ENCODE measurements at regions of chr18 and their contacts with region 1.

Region 1: DNA sequence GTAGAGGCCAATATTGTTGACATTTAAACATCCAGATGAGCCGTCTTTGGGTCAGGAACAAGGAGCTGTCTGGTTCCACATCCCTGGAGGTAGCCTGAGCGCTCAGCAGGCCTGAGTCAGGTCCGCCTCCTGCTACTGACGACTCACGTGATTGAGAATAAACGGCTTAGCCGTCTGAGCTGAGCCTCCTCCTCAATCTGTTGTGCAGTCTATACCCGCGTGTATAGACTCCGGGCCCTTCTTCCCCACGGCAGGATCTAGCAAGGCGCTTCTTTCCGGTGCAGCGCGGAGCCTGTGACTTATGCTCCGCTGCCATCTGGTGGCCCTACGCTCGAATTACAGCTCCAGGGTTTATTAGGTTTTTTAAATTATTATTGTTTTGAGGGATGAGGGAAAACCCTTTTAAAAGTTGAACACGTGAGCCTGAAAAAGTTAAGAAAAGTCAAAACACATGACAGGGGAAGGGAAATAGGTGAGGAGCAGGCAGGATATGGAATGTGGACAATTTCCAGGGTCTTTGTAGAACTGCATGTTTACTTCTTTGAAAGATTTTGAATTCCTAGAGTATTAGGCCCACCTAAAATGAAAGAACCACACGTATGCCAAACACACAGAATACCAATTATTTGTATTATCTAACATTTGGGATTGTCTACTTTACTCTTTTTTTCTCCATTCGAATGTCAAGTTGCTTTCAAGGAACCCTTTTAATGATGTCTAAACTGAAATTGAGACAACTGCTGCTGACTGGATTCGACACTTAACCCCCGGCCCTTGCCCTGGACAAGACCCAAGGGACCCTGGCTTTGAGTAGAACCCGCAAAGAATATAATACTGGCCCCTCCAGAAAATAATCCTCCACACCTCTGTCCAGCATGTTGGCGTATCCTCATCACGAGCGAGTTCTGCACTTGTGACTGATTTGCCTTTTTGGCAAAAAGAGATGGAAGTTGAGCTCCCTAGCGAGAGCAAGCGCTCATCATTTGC is 112.4 kb upstream of the ZNF236 start:
- H3K4me3 ChIP-seq: no peak overlapping the region
- H3K27ac ChIP-seq: no peak overlapping the region
- H3K4me1 ChIP-seq: no peaks in the 10 kb centered on the region
- CTCF ChIP-seq: peak; percentile 72

Region 2: DNA sequence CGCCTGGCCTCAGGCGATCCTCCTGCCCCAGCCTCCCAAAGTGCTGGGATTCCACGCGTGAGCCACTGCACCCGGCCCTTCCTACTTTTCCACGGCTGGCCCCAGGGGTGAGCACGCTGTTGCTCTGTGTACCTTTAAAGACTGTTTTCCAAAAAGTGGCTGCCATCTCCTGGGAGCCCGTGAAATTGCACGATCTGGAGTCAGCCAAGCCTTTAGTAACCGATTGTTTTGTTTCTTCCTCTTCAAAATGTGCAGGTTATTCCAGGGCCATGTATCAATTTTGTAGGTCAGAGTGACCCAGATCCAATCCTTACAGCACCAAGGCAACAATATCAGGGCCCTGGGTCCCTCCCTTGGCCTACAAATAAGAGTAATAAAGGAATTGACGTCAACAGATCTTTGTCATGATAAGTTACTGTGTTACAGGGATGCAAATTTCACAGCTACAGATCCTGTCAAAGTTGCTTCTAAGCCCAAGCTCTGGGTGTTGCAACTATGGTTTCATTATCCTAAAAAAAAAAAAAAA is 23.2 kb before region 1 on chr18:
- CTCF ChIA-PET with region 1: interaction called, 26 read pairs
- POLR2A ChIA-PET with region 1: no interaction called
- H3K4me3 ChIP-seq: no peak overlapping the region
- H3K27ac ChIP-seq: 0 out of 2 replicates have a peak overlapping the region, but pooled peaks have one; percentile 24
- H3K4me1 ChIP-seq: peaks cover 3% of the 10 kb centered on the region; the same call in 1 of the 2 replicates
- CTCF ChIP-seq: peak; percentile 50; the same call in 1 of the 2 replicates

Region 3: GRCh38 chr18:76805221-76805620 is 95.3 kb after region 1 on chr18:
- CTCF ChIA-PET with region 1: no interaction called
- POLR2A ChIA-PET with region 1: no interaction called
- H3K4me3 ChIP-seq: no peak overlapping the region
- H3K27ac ChIP-seq: no peak overlapping the region
- H3K4me1 ChIP-seq: 0 out of 2 replicates have a peak, but pooled peaks cover 3% of the 10 kb centered on the region
- CTCF ChIP-seq: no peak

Measured in HEK293 (cell line).